Gastrocnemius medialis (tissue), 4 donors: ENCODE measurements at regions of chr9 and their contacts with region 1.

Region 1: DNA sequence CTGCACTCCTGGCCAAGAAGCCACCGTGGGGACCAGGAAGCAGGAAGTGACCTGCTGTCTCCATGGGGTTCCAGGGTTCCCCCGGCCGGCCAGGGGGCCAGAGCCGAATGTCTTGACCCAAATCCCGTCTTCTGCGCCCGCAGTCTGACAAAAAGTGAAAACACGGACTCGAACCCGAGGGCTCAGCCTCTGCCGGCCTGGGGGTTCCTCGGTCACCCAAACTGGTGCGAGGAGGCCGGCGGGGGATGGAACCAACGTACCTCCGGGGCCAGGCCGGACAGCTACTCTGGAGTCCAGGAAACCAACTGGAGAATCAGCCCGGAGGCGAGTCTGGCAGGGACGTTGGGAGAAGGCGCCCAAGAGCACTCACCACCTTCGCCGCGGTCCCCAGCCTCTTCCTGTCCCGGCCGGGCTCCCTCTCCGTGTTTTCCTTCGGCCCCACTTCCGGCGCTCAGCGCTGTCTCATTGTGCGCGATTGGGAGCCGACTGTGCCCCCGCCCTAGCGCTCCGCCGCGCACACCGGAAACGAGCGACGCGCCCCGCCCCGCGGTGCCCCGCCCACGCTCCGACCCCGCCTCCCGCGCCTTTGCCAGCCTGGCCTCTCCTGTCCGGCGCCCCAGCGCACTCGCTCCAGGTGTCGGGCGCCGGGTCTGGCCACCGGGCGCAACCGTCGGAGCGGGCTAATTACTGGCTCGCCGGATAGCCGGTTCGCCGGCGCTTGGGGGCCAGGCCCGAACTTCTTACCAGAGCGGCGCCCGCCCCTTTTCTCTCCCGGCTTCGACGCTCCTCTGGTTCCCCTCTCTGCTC is at the start of gene TUT7:
- DNase-seq: peak; percentile 90 to 94
- ATAC-seq: peak; percentile 91 to 93
- H3K4me3 ChIP-seq: peak within 1 kb of the TSS; percentile 84 to 99 (median 92)
- H3K27ac ChIP-seq: peak within 1 kb of the TSS; percentile 94 to 99 (median 96)
- H3K4me1 ChIP-seq: peaks cover 41 to 43% of the 10 kb centered on the region in 2 donors
- H3K27me3 ChIP-seq: no peaks in the 10 kb centered on the region
- CTCF ChIP-seq: no peak
- POLR2A ChIP-seq: peak; percentile 83 to 90
- total RNA-seq, gene TUT7: 15.4 to 89.1 (median 38.6) TPM

Region 2: GRCh38 chr9:85940832-85941621 is 413.2 kb before region 1 on chr9 and contains the start of gene NAA35:
- in situ Hi-C with region 1: no loop called
- intact Hi-C with region 1: loop called (anchors 10 kb)
- DNase-seq: peak; percentile 97 to 98
- ATAC-seq: peak; percentile 93 to 94
- H3K4me3 ChIP-seq: peak within 1 kb of the TSS; percentile 92 to 97 (median 94)
- H3K27ac ChIP-seq: peak within 1 kb of the TSS; percentile 92 to 98 (median 97)
- H3K4me1 ChIP-seq: peaks cover 34 to 42% of the 10 kb centered on the region in 2 donors
- H3K27me3 ChIP-seq: no peaks in the 10 kb centered on the region
- CTCF ChIP-seq: no peak
- POLR2A ChIP-seq: peak; percentile 60 to 67
- total RNA-seq, gene NAA35: 22.7 to 26.9 (median 24.5) TPM

Region 3: GRCh38 chr9:86246752-86247161 is 107.5 kb before region 1 on chr9:
- in situ Hi-C with region 1: no loop called
- intact Hi-C with region 1: no loop called
- DNase-seq: peak in 1 of 2 donors; percentile 6
- ATAC-seq: peak in 1 of 2 donors; percentile 33
- H3K4me3 ChIP-seq: no peak overlapping the region
- H3K27ac ChIP-seq: no peak overlapping the region
- H3K4me1 ChIP-seq: no peaks in the 10 kb centered on the region
- H3K27me3 ChIP-seq: no peaks in the 10 kb centered on the region
- CTCF ChIP-seq: no peak
- POLR2A ChIP-seq: no peak

Region 4: GRCh38 chr9:86282077-86282978 is 71.9 kb before region 1 on chr9 and contains the start of gene ISCA1:
- in situ Hi-C with region 1: no loop called
- intact Hi-C with region 1: loop called (anchors 1 kb)
- DNase-seq: peak; percentile 93 to 96
- ATAC-seq: peak; percentile 88 to 89
- H3K4me3 ChIP-seq: peak within 1 kb of the TSS; percentile 87 to 98 (median 94)
- H3K27ac ChIP-seq: peak within 1 kb of the TSS; percentile 95 to 99 (median 97)
- H3K4me1 ChIP-seq: peaks cover 38 to 44% of the 10 kb centered on the region in 2 donors
- H3K27me3 ChIP-seq: no peaks in the 10 kb centered on the region
- CTCF ChIP-seq: peak in 1 of 5 experiments; percentile 11
- POLR2A ChIP-seq: peak; percentile 84 to 94
- total RNA-seq, gene ISCA1: 59.8 to 115 (median 89.9) TPM

Region 5: DNA sequence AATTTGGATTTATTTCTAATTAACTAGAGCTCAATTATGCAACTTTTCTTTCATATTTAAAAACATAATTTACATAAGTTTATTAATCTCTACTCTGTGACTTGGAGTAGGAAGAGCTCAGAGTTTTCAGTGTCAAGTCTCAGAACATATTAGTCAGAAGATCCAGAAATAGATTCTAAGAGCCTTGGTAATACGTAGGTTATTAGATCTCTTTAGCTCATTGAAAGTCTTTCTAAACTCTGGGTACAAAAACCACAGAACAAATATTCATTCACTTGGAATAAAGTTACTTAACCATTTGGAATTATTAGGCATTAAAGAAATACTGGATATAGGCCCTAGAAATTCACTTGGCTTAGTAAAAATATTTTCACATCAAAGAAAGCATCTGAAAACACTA is 45.5 kb before region 1 on chr9:
- in situ Hi-C with region 1: no loop called
- intact Hi-C with region 1: loop called (anchors 2 kb)
- DNase-seq: no peak
- ATAC-seq: peak; percentile 99 to 100
- H3K4me3 ChIP-seq: no peak overlapping the region
- H3K27ac ChIP-seq: peak overlapping the region; percentile 68 to 86 (median 82)
- H3K4me1 ChIP-seq: peaks cover 4 to 20% of the 10 kb centered on the region in 2 donors
- H3K27me3 ChIP-seq: no peaks in the 10 kb centered on the region
- CTCF ChIP-seq: no peak
- POLR2A ChIP-seq: no peak

Region 6: DNA sequence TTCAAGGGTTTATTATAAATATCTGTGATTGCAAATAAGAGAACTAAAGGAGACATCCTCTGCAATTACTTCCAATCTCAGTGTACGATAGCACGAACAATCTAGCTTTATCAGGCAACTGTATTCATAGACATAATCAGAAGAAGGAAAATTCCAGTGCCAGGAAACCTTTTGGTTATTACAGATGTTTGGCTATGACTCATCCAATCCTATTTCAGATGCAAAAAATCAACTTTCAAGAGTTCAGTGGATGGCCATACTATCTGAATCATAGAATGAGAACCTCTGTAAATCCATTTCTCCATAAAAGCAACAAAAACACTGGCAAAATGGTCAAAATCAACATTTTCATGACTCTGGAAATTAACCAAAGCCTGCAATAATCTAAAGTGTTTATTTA is 555.2 kb after region 1 on chr9:
- in situ Hi-C with region 1: no loop called
- intact Hi-C with region 1: no loop called
- DNase-seq: no peak
- ATAC-seq: no peak
- H3K4me3 ChIP-seq: no peak overlapping the region
- H3K27ac ChIP-seq: no peak overlapping the region
- H3K4me1 ChIP-seq: no peaks in the 10 kb centered on the region
- H3K27me3 ChIP-seq: peaks cover 0 to 3% (median 0%) of the 10 kb centered on the region in 3 donors
- CTCF ChIP-seq: no peak
- POLR2A ChIP-seq: no peak